MCF 10A (cell line): ENCODE measurements at regions of chr3 and their contacts with region 1.

Region 1: GRCh38 chr3:127574880-127575878 is 15.4 kb downstream of the TPRA1 start:
- DNase-seq: peak; percentile 91
- H3K4me3 Mint-ChIP-seq: no peak overlapping the region
- H3K27ac Mint-ChIP-seq: peak overlapping the region; percentile 23
- H3K4me1 Mint-ChIP-seq: peaks cover 6% of the 10 kb centered on the region
- H3K27me3 Mint-ChIP-seq: no peaks in the 10 kb centered on the region
- CTCF ChIP-seq: peak; percentile 96

Region 2: GRCh38 chr3:126419886-126420786 is 1155.0 kb before region 1 on chr3:
- CTCF ChIA-PET with region 1: no interaction called
- POLR2A ChIA-PET with region 1: no interaction called
- intact Hi-C with region 1: no loop called
- DNase-seq: no peak
- H3K4me3 Mint-ChIP-seq: no peak overlapping the region
- H3K27ac Mint-ChIP-seq: no peak overlapping the region
- H3K4me1 Mint-ChIP-seq: peaks cover 7% of the 10 kb centered on the region
- H3K27me3 Mint-ChIP-seq: no peaks in the 10 kb centered on the region
- CTCF ChIP-seq: no peak

Region 3: GRCh38 chr3:127264292-127264691 is 310.9 kb before region 1 on chr3:
- CTCF ChIA-PET with region 1: no interaction called
- POLR2A ChIA-PET with region 1: no interaction called
- intact Hi-C with region 1: no loop called
- DNase-seq: peak; percentile 75
- H3K4me3 Mint-ChIP-seq: no peak overlapping the region
- H3K27ac Mint-ChIP-seq: peak overlapping the region; percentile 1
- H3K4me1 Mint-ChIP-seq: peaks cover 12% of the 10 kb centered on the region
- H3K27me3 Mint-ChIP-seq: no peaks in the 10 kb centered on the region
- CTCF ChIP-seq: no peak

Region 4: DNA sequence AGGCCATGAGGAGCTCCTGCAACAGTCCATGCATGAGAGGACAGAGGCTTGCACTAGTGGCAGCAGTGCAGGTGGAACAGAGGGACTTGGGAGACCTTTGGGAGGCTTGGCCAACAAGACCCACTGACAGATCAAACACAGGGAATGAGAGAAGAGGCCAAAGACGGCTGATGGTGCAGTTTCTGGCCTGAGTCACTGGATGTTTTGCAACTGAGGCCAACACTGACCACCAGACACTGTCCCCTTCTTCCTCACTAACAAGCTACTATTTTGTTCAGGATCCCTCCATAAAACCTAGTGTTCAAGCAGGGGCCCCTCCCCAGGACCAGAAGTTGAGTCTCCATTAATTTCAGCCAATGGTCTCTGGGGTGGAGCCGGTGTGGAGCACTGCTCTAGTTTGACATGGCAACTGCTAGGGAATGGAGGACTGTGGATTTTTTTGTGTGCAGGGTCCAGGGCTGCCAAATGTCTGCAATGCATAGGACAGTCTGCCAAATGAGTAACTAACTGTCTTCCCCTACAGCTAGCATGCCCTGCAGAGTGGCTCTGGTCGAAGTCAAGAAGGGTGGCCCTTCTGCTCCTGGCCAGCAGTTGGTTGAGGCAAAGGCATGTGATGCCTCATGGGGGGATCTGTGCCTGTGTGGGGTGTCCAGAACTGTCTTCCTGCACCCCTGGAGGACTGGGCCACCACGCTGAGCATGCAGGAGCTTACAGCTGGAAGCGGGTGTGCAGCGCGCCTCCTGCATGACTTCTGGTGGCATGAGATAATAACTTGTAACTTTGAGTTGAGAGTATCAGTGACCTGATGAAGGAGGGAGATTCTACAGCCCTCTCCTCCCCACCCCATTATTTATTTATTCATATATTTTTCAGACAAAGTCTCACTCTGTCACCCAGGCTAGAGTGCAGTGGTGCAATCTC is 10.6 kb after region 1 on chr3:
- CTCF ChIA-PET with region 1: interaction called, 43 read pairs
- POLR2A ChIA-PET with region 1: interaction called, 18 read pairs
- intact Hi-C with region 1: loop called (anchors 1 kb)
- DNase-seq: no peak
- H3K4me3 Mint-ChIP-seq: no peak overlapping the region
- H3K27ac Mint-ChIP-seq: no peak overlapping the region
- H3K4me1 Mint-ChIP-seq: peaks cover 14% of the 10 kb centered on the region
- H3K27me3 Mint-ChIP-seq: no peaks in the 10 kb centered on the region
- CTCF ChIP-seq: no peak